ENCODE measurements at regions of chr22 and their contacts with region 1.

Region 1: DNA sequence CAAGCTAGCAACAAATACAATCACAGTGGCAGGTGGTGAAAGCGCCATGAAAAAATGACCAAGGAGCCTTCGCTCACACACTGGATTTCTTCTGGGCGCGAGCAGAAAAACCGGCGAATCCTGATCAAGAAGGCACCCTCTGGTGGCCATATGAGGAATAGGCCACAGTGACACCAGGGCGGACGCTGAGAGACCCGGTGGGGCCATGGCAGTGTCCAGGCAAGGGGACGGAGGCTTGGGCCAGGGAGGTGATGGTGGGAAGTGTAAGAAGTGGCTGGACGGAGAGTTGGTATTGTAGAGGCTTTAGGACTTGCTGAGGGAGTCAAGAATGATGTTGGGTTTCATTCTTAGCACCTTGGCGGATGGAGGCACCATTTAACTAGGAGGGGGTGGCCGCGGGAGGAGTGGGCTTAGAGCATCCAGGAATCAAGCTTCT is 16.9 kb upstream of the RAC2 start:
- DNase-seq: peak; percentile 62 to 70 (median 65)
- H3K4me3 ChIP-seq: no peak overlapping the region
- H3K4me3 Mint-ChIP-seq: peak overlapping the region in 4 of 8 donors; percentile 2 to 40 (median 22)
- H3K27ac ChIP-seq: no peak overlapping the region
- H3K27ac Mint-ChIP-seq: peak overlapping the region; percentile 15 to 73 (median 52)
- H3K4me1 ChIP-seq: peaks cover 19% of the 10 kb centered on the region
- H3K4me1 Mint-ChIP-seq: peaks cover 11 to 18% (median 14%) of the 10 kb centered on the region in 4 donors
- H3K27me3 ChIP-seq: no peaks in the 10 kb centered on the region
- H3K27me3 Mint-ChIP-seq: peaks cover 0 to 1% of the 10 kb centered on the region in 2 donors

Region 2: GRCh38 chr22:37166675-37167066 is 94.2 kb before region 1 on chr22:
- CTCF ChIA-PET with region 1: interaction called, 32 read pairs
- POLR2A ChIA-PET with region 1: interaction called, 3 read pairs
- intact Hi-C with region 1: loop called (anchors 1 kb)
- DNase-seq: peak; percentile 73 to 82 (median 78)
- H3K4me3 ChIP-seq: peak overlapping the region; percentile 15 to 18
- H3K4me3 Mint-ChIP-seq: peak overlapping the region; percentile 75 to 90 (median 86)
- H3K27ac ChIP-seq: peak overlapping the region; percentile 37
- H3K27ac Mint-ChIP-seq: peak overlapping the region; percentile 85 to 98 (median 93)
- H3K4me1 ChIP-seq: peaks cover 90% of the 10 kb centered on the region
- H3K4me1 Mint-ChIP-seq: peaks cover 63 to 95% (median 78%) of the 10 kb centered on the region in 4 donors
- H3K27me3 ChIP-seq: no peaks in the 10 kb centered on the region
- H3K27me3 Mint-ChIP-seq: no peaks in the 10 kb centered on the region

Region 3: DNA sequence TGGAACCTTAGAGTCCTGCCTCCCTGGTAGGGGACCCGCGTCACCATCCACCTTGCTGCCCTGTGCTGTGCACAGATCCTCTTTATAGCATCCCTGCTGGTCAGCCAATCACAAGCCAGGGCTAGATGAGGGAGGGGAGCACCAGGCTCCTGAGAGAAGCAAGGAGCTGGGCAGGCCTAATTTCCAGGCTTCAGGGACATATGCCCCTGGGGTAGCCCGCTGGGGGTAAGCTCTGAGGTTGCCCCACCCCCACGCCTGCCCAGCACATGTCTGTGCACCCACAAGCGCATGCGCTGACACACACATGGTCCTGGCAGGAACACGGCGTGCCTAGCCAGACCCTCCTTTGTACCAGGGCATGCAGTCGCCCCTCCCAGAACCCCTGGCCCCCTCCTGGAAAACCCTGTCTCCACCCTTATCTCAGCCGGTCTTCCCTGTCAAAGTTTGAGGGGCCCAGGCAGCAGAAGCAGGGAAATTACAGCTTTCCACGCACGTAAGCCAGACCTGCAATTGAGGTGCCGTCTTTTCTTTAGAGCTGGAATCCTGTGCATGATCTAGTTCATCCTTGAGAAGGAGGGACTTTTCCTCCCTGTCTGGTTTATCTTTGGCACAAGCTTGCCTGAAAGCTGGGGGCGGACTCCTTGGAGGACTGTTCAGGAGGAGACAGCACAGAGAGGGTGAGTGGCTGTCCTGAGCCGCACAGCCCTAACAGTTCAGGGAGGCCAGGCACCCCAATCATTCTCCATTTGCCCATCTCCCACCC is 50.7 kb before region 1 on chr22:
- CTCF ChIA-PET with region 1: interaction called, 10 read pairs
- POLR2A ChIA-PET with region 1: no interaction called
- intact Hi-C with region 1: no loop called
- DNase-seq: no peak
- H3K4me3 ChIP-seq: no peak overlapping the region
- H3K4me3 Mint-ChIP-seq: no peak overlapping the region
- H3K27ac ChIP-seq: no peak overlapping the region
- H3K27ac Mint-ChIP-seq: peak overlapping the region in 1 of 7 donors; percentile 53
- H3K4me1 ChIP-seq: peaks cover 14% of the 10 kb centered on the region
- H3K4me1 Mint-ChIP-seq: peaks cover 8 to 17% (median 11%) of the 10 kb centered on the region in 4 donors
- H3K27me3 ChIP-seq: no peaks in the 10 kb centered on the region
- H3K27me3 Mint-ChIP-seq: no peaks in the 10 kb centered on the region

Region 4: GRCh38 chr22:37237371-37238268 is 23.3 kb before region 1 on chr22:
- CTCF ChIA-PET with region 1: interaction called, 491 read pairs
- POLR2A ChIA-PET with region 1: interaction called, 145 read pairs
- intact Hi-C with region 1: loop called (anchors 1 kb)
- DNase-seq: no peak
- H3K4me3 ChIP-seq: peak overlapping the region; percentile 4 to 8
- H3K4me3 Mint-ChIP-seq: peak overlapping the region; percentile 80 to 96 (median 88)
- H3K27ac ChIP-seq: peak overlapping the region; percentile 91
- H3K27ac Mint-ChIP-seq: peak overlapping the region; percentile 87 to 98 (median 97)
- H3K4me1 ChIP-seq: peaks cover 96% of the 10 kb centered on the region
- H3K4me1 Mint-ChIP-seq: peaks cover 68 to 100% (median 88%) of the 10 kb centered on the region in 4 donors
- H3K27me3 ChIP-seq: no peaks in the 10 kb centered on the region
- H3K27me3 Mint-ChIP-seq: no peaks in the 10 kb centered on the region

Region 5: GRCh38 chr22:37316875-37317371 is 56.0 kb after region 1 on chr22:
- CTCF ChIA-PET with region 1: interaction called, 42 read pairs
- POLR2A ChIA-PET with region 1: interaction called, 111 read pairs
- intact Hi-C with region 1: no loop called
- DNase-seq: peak; percentile 63 to 76 (median 69)
- H3K4me3 ChIP-seq: no peak overlapping the region
- H3K4me3 Mint-ChIP-seq: no peak overlapping the region
- H3K27ac ChIP-seq: no peak overlapping the region
- H3K27ac Mint-ChIP-seq: peak overlapping the region in 3 of 7 donors; percentile 8 to 48 (median 12)
- H3K4me1 ChIP-seq: peaks cover 32% of the 10 kb centered on the region
- H3K4me1 Mint-ChIP-seq: peaks cover 15 to 47% (median 31%) of the 10 kb centered on the region in 4 donors
- H3K27me3 ChIP-seq: no peaks in the 10 kb centered on the region
- H3K27me3 Mint-ChIP-seq: peaks cover 0 to 2% of the 10 kb centered on the region in 2 donors

Region 6: GRCh38 chr22:37410174-37411055 is 149.5 kb after region 1 on chr22:
- CTCF ChIA-PET with region 1: no interaction called
- POLR2A ChIA-PET with region 1: no interaction called
- intact Hi-C with region 1: no loop called
- DNase-seq: no peak
- H3K4me3 ChIP-seq: no peak overlapping the region
- H3K4me3 Mint-ChIP-seq: no peak overlapping the region
- H3K27ac ChIP-seq: no peak overlapping the region
- H3K27ac Mint-ChIP-seq: no peak overlapping the region
- H3K4me1 ChIP-seq: no peaks in the 10 kb centered on the region
- H3K4me1 Mint-ChIP-seq: peaks cover 0 to 11% (median under 1%) of the 10 kb centered on the region in 4 donors
- H3K27me3 ChIP-seq: no peaks in the 10 kb centered on the region
- H3K27me3 Mint-ChIP-seq: peaks cover 1 to 13% of the 10 kb centered on the region in 2 donors

Region 7: DNA sequence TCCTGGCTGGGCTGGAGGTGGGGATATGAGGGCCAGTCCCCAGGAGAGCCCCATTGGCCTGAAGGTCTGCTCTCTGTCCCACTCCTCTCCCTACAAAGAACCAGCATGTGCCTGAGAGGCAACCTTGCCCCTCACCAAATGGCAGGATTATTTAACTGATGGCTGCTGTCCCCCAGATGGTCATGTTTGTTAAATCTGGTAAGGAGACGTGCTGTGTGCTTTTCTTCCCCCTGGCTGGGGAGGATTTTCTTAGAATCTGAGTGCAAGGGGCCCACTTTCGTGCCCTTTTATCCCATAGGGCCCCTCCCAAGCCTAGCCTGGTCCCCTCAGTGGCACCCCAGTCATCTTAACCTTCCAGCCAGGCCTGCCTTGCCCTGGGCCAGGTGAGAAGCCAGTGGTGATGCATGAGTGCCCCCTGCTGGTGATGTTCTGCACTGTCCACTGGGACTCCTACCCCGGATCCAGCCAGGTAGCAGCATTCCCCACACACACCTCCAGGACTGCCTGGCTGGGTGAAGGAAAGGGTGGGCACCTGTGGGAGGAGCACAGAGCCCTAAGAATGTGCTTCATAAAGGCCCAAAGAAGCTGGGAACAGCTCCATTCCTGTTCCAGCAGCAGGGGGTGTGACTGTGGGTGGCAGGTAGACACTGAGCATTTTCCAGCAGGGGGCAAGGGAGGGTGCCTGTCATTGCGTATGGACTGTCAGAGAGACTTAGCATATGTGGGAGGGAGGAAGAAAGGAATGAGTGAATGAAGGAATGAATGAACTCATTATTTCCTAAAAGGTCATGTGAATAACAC is 196.4 kb after region 1 on chr22:
- CTCF ChIA-PET with region 1: interaction called, 28 read pairs
- POLR2A ChIA-PET with region 1: no interaction called
- intact Hi-C with region 1: no loop called
- DNase-seq: peak; percentile 74 to 80 (median 77)
- H3K4me3 ChIP-seq: no peak overlapping the region
- H3K4me3 Mint-ChIP-seq: no peak overlapping the region
- H3K27ac ChIP-seq: no peak overlapping the region
- H3K27ac Mint-ChIP-seq: peak overlapping the region in 6 of 7 donors; percentile 15 to 57 (median 22)
- H3K4me1 ChIP-seq: peaks cover 3% of the 10 kb centered on the region
- H3K4me1 Mint-ChIP-seq: peaks cover 0 to 7% (median 5%) of the 10 kb centered on the region in 4 donors
- H3K27me3 ChIP-seq: no peaks in the 10 kb centered on the region
- H3K27me3 Mint-ChIP-seq: no peaks in the 10 kb centered on the region